Activated T-helper 2 cell treated with anti-CD3 and anti-CD28 coated beads, Interferon-gamma antibody, Interleukin-2, Interleukin-4, amounts not matched to agents 10 μg/mL and 5 μg/mL and 100 μg/mL, durations not matched to agents 14 hours and 24 hours and 36 hours (primary cell): ENCODE measurements at regions of chr11 and their contacts with region 1.

Region 1: GRCh38 chr11:5791165-5791564 is at the start of gene OR52N1:
- DNase-seq: no peak
- H3K4me3 Mint-ChIP-seq: no peak within 1 kb of the TSS
- H3K27ac Mint-ChIP-seq: no peak within 1 kb of the TSS
- H3K4me1 Mint-ChIP-seq: no peaks in the 10 kb centered on the region
- H3K27me3 Mint-ChIP-seq: peaks cover 2% of the 10 kb centered on the region
- total RNA-seq, gene OR52N1: not detected in 2 replicates

Region 2: GRCh38 chr11:5767056-5767455 is 24.1 kb before region 1 on chr11:
- intact Hi-C with region 1: loop called (anchors 1 kb)
- DNase-seq: no peak
- H3K4me3 Mint-ChIP-seq: no peak overlapping the region
- H3K27ac Mint-ChIP-seq: no peak overlapping the region
- H3K4me1 Mint-ChIP-seq: no peaks in the 10 kb centered on the region
- H3K27me3 Mint-ChIP-seq: no peaks in the 10 kb centered on the region

Region 3: GRCh38 chr11:5831196-5831829 is 40.1 kb after region 1 on chr11:
- intact Hi-C with region 1: no loop called
- DNase-seq: no peak
- H3K4me3 Mint-ChIP-seq: no peak overlapping the region
- H3K27ac Mint-ChIP-seq: no peak overlapping the region
- H3K4me1 Mint-ChIP-seq: no peaks in the 10 kb centered on the region
- H3K27me3 Mint-ChIP-seq: no peaks in the 10 kb centered on the region

Region 4: DNA sequence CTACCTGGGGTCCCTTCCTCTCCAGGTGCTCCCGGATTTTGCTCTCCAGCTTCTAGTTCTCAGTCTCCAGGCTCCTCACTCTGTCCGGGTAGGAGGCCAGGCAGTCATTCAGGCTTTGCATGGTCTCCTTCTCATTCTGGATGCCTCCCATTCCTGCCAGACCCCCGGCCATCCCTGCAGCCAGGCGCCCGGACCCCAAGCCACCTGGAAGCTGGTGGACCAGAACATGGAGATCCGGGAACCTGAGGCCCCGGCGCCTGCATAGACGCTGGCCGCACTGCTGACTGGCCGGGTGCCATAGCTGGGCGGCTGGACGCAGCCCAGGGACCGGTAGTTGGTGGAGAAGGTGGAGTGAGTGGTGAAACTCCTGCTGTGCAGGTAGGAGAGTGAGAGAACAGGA is 203.6 kb after region 1 on chr11:
- intact Hi-C with region 1: no loop called
- DNase-seq: no peak
- H3K4me3 Mint-ChIP-seq: no peak overlapping the region
- H3K27ac Mint-ChIP-seq: no peak overlapping the region
- H3K4me1 Mint-ChIP-seq: no peaks in the 10 kb centered on the region
- H3K27me3 Mint-ChIP-seq: no peaks in the 10 kb centered on the region